ENCODE measurements at regions of chr17 and their contacts with region 1.

Region 1: GRCh38 chr17:385926-386876 is 33.6 kb upstream of the RPH3AL start:
- DNase-seq: peak; percentile 34
- H3K4me3 ChIP-seq: peak overlapping the region in 1 of 3 experiments; percentile 31
- H3K27ac ChIP-seq: no peak overlapping the region
- H3K4me1 ChIP-seq: peaks cover 5% of the 10 kb centered on the region
- H3K27me3 ChIP-seq: no peaks in the 10 kb centered on the region
- CTCF ChIP-seq: peak; percentile 30 to 58
- POLR2A ChIP-seq: no peak

Region 2: GRCh38 chr17:143782-144281 is 242.4 kb before region 1 on chr17:
- CTCF ChIA-PET with region 1: interaction called, 20 read pairs
- POLR2A ChIA-PET with region 1: interaction called, 4 read pairs
- dilution Hi-C with region 1: no loop called
- intact Hi-C with region 1: loop called (anchors 2 kb)
- DNase-seq: peak; percentile 73
- H3K4me3 ChIP-seq: no peak overlapping the region
- H3K27ac ChIP-seq: no peak overlapping the region
- H3K4me1 ChIP-seq: no peaks in the 10 kb centered on the region
- H3K27me3 ChIP-seq: no peaks in the 10 kb centered on the region
- CTCF ChIP-seq: peak; percentile 73 to 87
- POLR2A ChIP-seq: no peak

Region 3: DNA sequence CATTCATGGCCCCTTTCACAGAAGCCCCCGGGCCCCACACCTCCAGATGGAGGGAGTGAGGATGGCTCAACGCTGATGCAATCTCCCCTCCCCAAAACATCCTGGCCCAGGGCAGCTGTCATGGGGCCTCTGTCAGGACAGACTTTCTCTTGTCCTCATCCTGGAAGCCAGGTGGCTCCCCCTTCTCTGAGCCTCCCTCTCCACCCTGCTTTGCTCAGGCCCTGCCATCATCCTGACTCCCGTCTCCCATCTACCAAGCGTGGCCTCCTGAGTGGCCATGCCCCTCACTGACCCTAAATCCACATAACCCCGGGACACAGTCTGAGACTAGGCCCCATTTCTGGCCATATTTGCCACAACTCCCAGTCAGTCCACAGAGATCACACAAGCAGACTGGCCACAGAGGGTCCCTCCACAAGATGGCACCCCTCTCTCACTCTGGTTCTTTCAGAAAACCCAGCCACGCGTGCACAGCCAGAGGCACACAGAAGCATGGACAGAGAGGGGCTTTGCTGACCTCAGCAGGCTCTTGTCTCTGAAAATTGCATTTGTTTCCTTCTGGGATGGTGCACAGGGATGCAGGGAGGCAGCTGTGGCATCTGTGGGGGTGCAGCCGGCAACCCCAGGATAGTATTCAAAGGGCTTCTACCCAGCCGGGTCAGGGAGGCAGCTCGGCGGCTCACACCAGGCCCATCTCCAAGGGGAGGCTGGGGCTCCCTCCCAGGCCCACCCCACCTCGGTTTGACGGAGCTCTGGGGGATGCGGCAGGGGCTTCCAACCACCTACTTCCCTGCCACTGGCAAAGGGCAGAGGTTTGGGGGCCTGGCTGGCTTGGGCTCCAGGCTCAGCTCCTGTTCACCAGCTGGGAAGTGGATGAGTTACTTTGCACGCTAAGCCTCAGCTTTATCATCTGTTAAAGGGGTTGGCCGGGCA is 221.6 kb before region 1 on chr17:
- CTCF ChIA-PET with region 1: interaction called, 85 read pairs
- POLR2A ChIA-PET with region 1: interaction called, 6 read pairs
- dilution Hi-C with region 1: no loop called
- intact Hi-C with region 1: loop called (anchors 2 kb)
- DNase-seq: peak; percentile 69
- H3K4me3 ChIP-seq: no peak overlapping the region
- H3K27ac ChIP-seq: no peak overlapping the region
- H3K4me1 ChIP-seq: no peaks in the 10 kb centered on the region
- H3K27me3 ChIP-seq: no peaks in the 10 kb centered on the region
- CTCF ChIP-seq: peak; percentile 65 to 83
- POLR2A ChIP-seq: no peak

Region 4: GRCh38 chr17:309361-309888 is 76.8 kb before region 1 on chr17:
- CTCF ChIA-PET with region 1: interaction called, 5 read pairs
- POLR2A ChIA-PET with region 1: no interaction called
- dilution Hi-C with region 1: no loop called
- intact Hi-C with region 1: loop called (anchors 2 kb)
- DNase-seq: peak; percentile 48
- H3K4me3 ChIP-seq: no peak overlapping the region
- H3K27ac ChIP-seq: no peak overlapping the region
- H3K4me1 ChIP-seq: no peaks in the 10 kb centered on the region
- H3K27me3 ChIP-seq: no peaks in the 10 kb centered on the region
- CTCF ChIP-seq: peak; percentile 95 to 97
- POLR2A ChIP-seq: no peak

Region 5: DNA sequence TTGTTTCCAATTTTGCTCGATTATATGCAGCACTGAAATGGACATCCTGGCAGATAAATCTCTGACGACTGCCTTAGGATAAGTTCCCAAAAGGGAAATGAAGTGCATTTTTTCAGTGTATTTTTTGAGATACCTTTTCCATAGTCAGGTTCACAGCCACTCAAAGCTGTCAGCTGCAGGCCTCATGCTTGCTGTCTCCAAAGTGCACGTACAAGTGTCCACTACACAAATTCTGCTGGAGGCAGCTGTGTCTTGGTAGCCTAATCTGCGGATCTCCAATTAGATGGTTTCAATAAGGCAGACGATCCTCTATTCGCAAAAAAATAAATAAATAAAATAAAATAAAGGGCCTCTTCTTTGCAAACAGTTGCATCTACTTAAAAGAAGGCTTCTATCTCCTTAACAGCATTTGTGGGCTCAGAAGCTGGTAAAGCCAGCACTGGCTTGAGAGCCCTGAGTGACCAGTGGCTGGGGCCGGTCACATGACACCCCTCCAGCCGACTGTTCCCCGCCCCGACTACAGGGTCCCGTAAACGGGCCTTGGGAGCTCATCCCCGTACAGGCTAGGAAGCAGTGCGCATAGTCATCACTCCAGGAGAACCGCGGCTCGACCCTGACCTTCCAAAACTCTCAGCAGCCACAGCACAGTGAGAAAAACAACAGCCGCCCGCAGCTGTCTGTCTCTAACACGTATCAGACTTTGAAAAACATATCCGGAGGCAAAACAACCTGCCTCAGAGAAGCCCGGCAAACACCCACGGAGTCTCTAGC is 52.4 kb before region 1 on chr17:
- CTCF ChIA-PET with region 1: interaction called, 11 read pairs
- POLR2A ChIA-PET with region 1: no interaction called
- dilution Hi-C with region 1: no loop called
- intact Hi-C with region 1: no loop called
- DNase-seq: peak; percentile 82
- H3K4me3 ChIP-seq: peak overlapping the region; percentile 5 to 58 (median 30)
- H3K27ac ChIP-seq: no peak overlapping the region
- H3K4me1 ChIP-seq: peaks cover 10% of the 10 kb centered on the region
- H3K27me3 ChIP-seq: no peaks in the 10 kb centered on the region
- CTCF ChIP-seq: no peak
- POLR2A ChIP-seq: no peak

Region 6: GRCh38 chr17:444879-445454 is 58.8 kb after region 1 on chr17:
- CTCF ChIA-PET with region 1: no interaction called
- POLR2A ChIA-PET with region 1: no interaction called
- dilution Hi-C with region 1: no loop called
- intact Hi-C with region 1: no loop called
- DNase-seq: no peak
- H3K4me3 ChIP-seq: no peak overlapping the region
- H3K27ac ChIP-seq: no peak overlapping the region
- H3K4me1 ChIP-seq: no peaks in the 10 kb centered on the region
- H3K27me3 ChIP-seq: no peaks in the 10 kb centered on the region
- CTCF ChIP-seq: no peak
- POLR2A ChIP-seq: no peak